B cell (primary cell): ENCODE measurements at regions of chr5 and their contacts with region 1.

Region 1: GRCh38 chr5:7941692-7942091 is 72.7 kb downstream of the MTRR start:
- DNase-seq: no peak
- ATAC-seq: no peak
- H3K4me3 ChIP-seq: no peak overlapping the region
- H3K4me3 Mint-ChIP-seq: no peak overlapping the region
- H3K27ac ChIP-seq: no peak overlapping the region
- H3K27ac Mint-ChIP-seq: no peak overlapping the region
- H3K4me1 ChIP-seq: no peaks in the 10 kb centered on the region
- H3K4me1 Mint-ChIP-seq: peaks cover 3% of the 10 kb centered on the region
- H3K27me3 ChIP-seq: peaks cover 0 to 3% (median 0%) of the 10 kb centered on the region in 4 experiments
- H3K27me3 Mint-ChIP-seq: peaks cover 7% of the 10 kb centered on the region
- CTCF ChIP-seq: no peak

Region 2: DNA sequence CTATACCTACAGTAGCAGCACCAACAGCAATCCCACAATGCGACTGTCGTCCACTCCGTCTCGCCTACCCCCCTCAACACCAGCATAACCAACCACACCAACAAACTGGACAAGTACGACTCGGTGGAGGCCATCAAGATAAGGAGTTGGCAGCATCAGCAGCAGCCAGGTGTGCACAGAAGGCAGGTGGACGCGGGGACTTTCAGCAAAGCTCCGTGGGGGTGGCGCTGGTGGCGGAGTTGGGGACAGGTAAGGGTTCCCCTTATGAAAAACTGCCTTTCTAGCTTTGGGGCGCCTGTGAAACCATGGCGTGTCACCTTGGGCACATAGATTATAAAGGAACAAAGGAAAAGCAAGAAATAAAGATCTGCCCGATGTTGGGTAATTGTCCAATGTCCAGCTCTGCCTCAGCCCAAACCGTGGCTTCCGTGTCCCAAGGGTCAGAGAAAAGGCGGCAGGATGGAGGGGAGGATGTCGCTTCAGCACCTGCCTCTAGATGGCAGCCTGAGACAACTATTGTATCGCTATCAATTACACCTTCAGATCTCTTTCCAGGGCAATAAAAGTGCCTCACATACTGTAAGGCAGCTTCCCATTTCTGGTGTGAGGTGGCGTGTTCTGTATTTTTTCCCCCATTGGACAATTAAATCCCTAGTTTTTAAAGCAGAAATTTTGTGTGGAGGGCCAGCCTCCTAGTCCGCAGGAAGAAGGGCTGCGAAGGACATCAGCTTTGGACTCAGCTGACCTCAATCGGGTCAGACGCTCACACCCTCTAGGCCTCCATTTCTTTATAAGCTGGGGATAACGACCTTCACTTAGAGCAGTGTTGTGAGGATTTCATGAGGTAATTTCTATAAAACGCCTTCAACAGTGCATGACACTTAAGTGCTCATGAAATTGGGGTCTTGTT is 14.0 kb before region 1 on chr5:
- CTCF ChIA-PET with region 1: interaction called, 16 read pairs
- POLR2A ChIA-PET with region 1: no interaction called
- intact Hi-C with region 1: no loop called
- DNase-seq: peak; percentile 58
- ATAC-seq: peak; percentile 62
- H3K4me3 ChIP-seq: no peak overlapping the region
- H3K4me3 Mint-ChIP-seq: no peak overlapping the region
- H3K27ac ChIP-seq: no peak overlapping the region
- H3K27ac Mint-ChIP-seq: no peak overlapping the region
- H3K4me1 ChIP-seq: no peaks in the 10 kb centered on the region
- H3K4me1 Mint-ChIP-seq: peaks cover 1% of the 10 kb centered on the region
- H3K27me3 ChIP-seq: no peaks in the 10 kb centered on the region
- H3K27me3 Mint-ChIP-seq: peaks cover 8% of the 10 kb centered on the region
- CTCF ChIP-seq: peak; percentile 81